Left ventricle myocardium inferior (tissue), 1 donor: ENCODE measurements at regions of chr10 and their contacts with region 1.

Region 1: DNA sequence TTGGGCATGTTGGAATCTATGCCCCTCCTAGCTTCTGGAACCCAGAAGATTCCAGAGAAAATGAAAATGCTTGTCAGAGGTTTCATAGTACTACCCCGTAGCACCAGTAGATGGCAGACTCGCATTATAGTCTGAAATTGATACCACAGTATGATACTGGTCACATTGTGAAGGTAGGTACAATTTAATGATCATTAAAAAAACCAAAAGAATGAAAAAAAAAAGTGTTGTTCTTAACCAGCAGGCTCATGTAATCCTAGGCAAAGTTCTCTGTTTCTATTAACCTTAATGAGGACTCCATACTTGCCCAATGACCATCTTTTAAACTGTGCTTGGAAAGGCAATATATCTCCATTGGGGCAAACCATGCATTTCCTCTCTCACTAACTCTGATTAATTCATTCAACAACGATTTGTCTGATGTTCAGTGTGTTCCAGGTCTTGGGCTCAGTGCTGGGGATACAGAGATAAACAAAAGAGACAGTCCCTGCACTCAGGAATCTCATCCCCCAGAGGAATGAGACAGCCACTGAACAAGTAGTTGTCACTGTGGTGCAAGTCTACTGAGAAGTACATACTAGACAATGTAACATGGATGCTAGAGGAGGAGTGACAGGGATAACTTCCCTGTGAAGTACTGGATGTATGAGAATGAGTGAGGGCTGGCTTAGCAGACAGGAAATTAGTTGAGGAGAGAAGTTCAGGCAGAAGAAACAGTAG is 223.5 kb upstream of the PHYHIPL start:
- DNase-seq: no peak
- H3K4me3 ChIP-seq: no peak overlapping the region
- H3K27ac ChIP-seq: peak overlapping the region; percentile 73
- H3K4me1 ChIP-seq: no peaks in the 10 kb centered on the region
- H3K27me3 ChIP-seq: no peaks in the 10 kb centered on the region
- CTCF ChIP-seq: peak; percentile 88

Region 2: GRCh38 chr10:58590152-58590840 is 362.6 kb before region 1 on chr10:
- intact Hi-C with region 1: no loop called
- DNase-seq: no peak
- H3K4me3 ChIP-seq: no peak overlapping the region
- H3K27ac ChIP-seq: peak overlapping the region; percentile 46
- H3K4me1 ChIP-seq: peaks cover 14% of the 10 kb centered on the region
- H3K27me3 ChIP-seq: no peaks in the 10 kb centered on the region
- CTCF ChIP-seq: no peak

Region 3: GRCh38 chr10:59181668-59182067 is 228.8 kb after region 1 on chr10:
- intact Hi-C with region 1: loop called (anchors 5 kb)
- DNase-seq: no peak
- H3K4me3 ChIP-seq: no peak overlapping the region
- H3K27ac ChIP-seq: no peak overlapping the region
- H3K4me1 ChIP-seq: peaks cover 7% of the 10 kb centered on the region
- H3K27me3 ChIP-seq: peaks cover 37% of the 10 kb centered on the region
- CTCF ChIP-seq: peak; percentile 73

Region 4: DNA sequence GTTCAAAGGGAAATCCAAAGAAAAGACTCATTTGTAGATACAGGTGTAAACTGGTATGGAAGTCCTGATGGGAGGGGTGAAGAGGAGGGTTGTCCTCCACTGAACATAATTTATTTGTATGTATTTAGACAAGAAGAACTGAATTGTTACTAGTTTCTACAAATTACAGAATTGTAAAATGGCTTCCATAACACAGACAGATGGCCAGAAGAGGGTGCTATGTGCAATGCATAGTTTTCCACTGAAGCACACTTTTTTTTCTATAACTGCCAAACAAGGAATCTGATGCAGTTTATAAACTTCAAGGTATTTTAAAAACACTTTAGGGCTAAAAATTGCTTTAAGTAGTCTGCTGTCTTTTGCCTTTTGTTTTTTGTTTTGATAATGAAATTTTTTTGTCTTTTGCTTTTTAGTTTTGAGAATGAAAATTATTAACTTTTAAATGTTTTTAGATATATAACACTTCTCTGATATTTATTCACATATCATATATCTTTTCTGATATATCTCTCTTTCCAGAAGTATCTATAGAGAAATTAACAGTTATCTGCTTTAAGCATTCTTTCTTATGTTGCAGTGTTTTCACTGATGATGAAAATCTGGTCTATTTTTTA is 282.0 kb after region 1 on chr10:
- intact Hi-C with region 1: loop called (anchors 5 kb)
- DNase-seq: no peak
- H3K4me3 ChIP-seq: no peak overlapping the region
- H3K27ac ChIP-seq: no peak overlapping the region
- H3K4me1 ChIP-seq: no peaks in the 10 kb centered on the region
- H3K27me3 ChIP-seq: no peaks in the 10 kb centered on the region
- CTCF ChIP-seq: peak; percentile 65